A673 (cell line): ENCODE measurements at regions of chr7 and their contacts with region 1.

Region 1: GRCh38 chr7:146956321-146956720 is 839.7 kb downstream of the CNTNAP2 start:
- DNase-seq: peak; percentile 84
- H3K4me3 ChIP-seq: no peak overlapping the region
- H3K27ac ChIP-seq: peak overlapping the region; percentile 48
- H3K4me1 ChIP-seq: peaks cover 39% of the 10 kb centered on the region
- H3K27me3 ChIP-seq: no peaks in the 10 kb centered on the region
- CTCF ChIP-seq: no peak

Region 2: DNA sequence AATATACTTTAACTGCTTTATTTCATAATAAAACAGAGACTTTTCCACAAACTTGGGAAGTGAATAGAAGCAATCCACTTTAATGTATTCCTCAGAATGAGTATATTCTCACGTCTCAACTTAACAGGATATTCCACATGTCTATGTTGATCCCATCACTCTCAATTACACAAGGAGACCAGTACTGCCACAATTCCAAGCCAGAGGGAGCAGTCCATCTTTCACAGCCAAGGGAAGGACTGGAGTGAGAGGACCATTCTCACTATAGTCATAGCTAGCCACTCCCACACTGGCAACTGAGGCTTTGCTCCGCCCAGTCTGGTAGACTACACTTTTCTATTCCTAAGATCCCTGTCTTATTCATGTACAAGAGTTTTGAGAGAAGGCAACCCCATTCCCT is 285.8 kb before region 1 on chr7:
- CTCF ChIA-PET with region 1: no interaction called
- POLR2A ChIA-PET with region 1: no interaction called
- intact Hi-C with region 1: no loop called
- DNase-seq: no peak
- H3K4me3 ChIP-seq: no peak overlapping the region
- H3K27ac ChIP-seq: no peak overlapping the region
- H3K4me1 ChIP-seq: no peaks in the 10 kb centered on the region
- H3K27me3 ChIP-seq: no peaks in the 10 kb centered on the region
- CTCF ChIP-seq: no peak

Region 3: GRCh38 chr7:147231275-147231674 is 275.0 kb after region 1 on chr7:
- CTCF ChIA-PET with region 1: no interaction called
- POLR2A ChIA-PET with region 1: no interaction called
- intact Hi-C with region 1: loop called (anchors 10 kb)
- DNase-seq: no peak
- H3K4me3 ChIP-seq: no peak overlapping the region
- H3K27ac ChIP-seq: no peak overlapping the region
- H3K4me1 ChIP-seq: no peaks in the 10 kb centered on the region
- H3K27me3 ChIP-seq: no peaks in the 10 kb centered on the region
- CTCF ChIP-seq: no peak